ENCODE measurements at regions of chr19 and their contacts with region 1.

Region 1: DNA sequence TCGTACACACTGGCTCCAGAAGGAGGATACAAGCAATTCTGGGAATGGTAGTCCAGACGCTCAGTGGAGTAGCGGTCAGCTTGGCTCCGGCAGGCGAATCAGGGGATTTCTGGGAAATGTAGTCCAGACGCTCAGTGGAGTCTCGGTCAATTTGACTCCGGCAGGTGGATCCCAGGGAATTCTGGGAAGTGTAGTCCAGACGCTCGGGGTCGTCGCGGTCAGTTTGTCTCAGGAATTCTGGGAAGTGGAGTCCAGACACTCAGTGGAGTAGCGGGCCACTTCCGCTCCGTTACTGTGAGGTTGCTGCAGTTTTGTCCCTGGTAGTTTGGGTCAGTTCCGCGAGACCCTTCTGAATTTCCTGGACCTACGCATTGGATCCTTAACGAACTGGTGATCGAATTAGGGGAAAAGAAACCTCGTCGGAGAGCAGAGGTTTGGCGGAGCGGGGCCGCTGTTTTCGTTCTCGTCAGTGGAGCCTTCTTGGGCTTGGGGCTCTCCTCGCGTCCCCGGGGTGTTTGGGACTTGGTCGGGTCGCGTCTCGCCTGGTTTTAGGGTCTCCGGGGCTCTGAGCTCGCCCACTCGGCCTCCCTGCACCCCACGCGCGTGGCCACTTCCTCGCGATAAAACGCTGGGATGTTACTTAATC is at the start of gene ZNF225:
- DNase-seq: peak; percentile 98
- H3K4me3 ChIP-seq: peak within 1 kb of the TSS; percentile 48 to 79 (median 64)
- H3K27ac ChIP-seq: peak within 1 kb of the TSS; percentile 76 to 83 (median 82)
- H3K4me1 ChIP-seq: peaks cover 0 to 24% (median 20%) of the 10 kb centered on the region in 4 donors
- H3K27me3 ChIP-seq: no peaks in the 10 kb centered on the region
- CTCF ChIP-seq: no peak
- EP300 ChIP-seq: peak in 1 of 4 donors; percentile 25
- POLR2A ChIP-seq: no peak
- total RNA-seq, gene ZNF225: 3.0 to 4.9 (median 3.4) TPM

Region 2: GRCh38 chr19:43934985-43935708 is 178.1 kb before region 1 on chr19 and contains the start of gene ZNF45:
- intact Hi-C with region 1: loop called (anchors 2 kb)
- DNase-seq: peak; percentile 92
- H3K4me3 ChIP-seq: peak within 1 kb of the TSS; percentile 50 to 68 (median 65)
- H3K27ac ChIP-seq: peak within 1 kb of the TSS; percentile 86 to 89 (median 88)
- H3K4me1 ChIP-seq: peaks cover 0 to 21% (median 9%) of the 10 kb centered on the region in 4 donors
- H3K27me3 ChIP-seq: no peaks in the 10 kb centered on the region
- CTCF ChIP-seq: no peak
- EP300 ChIP-seq: no peak
- POLR2A ChIP-seq: peak in 1 of 2 donors; percentile 17
- total RNA-seq, gene ZNF45: 5.5 to 18.2 (median 13.2) TPM

Region 3: DNA sequence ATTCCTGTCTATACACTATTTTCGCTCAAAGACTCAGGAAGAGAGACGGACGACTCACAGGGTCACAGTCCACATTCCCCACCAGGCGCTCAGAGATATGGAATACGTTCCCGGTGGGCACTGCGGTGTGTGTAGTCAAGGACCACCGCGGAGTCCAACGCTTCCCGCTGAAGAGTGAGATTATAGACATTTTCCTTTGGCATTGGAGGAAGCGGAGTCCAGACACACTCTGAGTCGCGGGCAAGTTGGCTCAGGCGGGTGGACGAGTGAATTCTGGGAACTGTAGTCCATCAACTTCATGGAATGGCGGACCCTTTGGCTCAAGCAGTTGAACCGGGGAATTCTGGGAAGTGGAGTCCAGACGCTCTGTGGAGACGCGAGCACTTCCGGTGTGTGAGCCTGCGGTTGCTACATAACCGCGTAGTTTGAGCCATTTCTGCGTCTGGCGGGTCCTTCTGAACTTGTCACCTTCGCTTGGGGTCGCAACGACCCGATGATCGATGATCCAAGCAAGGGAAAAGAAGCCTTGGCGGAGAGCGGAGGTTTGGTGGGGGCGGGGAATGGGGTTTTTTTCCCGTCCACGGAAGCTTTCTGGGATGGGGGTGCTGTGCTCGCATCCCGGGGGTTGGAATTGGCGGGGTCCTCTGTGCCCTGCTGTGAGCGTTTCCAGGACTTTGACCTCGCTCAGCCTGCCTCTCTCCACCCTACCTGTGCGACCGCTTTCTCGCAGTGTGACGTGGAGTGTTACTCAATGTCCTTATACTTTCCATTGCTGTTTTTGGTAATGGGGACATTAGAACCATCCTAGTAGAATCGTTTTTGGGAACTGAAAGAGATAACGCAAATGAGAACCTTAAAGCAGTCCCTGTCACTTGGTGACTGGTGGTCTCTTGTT is 110.4 kb before region 1 on chr19 and contains the start of gene ZNF230:
- intact Hi-C with region 1: loop called (anchors 5 kb)
- DNase-seq: peak; percentile 96
- H3K4me3 ChIP-seq: peak within 1 kb of the TSS; percentile 57 to 85 (median 69)
- H3K27ac ChIP-seq: peak within 1 kb of the TSS; percentile 69 to 81 (median 80)
- H3K4me1 ChIP-seq: peaks cover 0 to 19% (median 12%) of the 10 kb centered on the region in 4 donors
- H3K27me3 ChIP-seq: no peaks in the 10 kb centered on the region
- CTCF ChIP-seq: peak in 1 of 4 experiments; percentile 14
- EP300 ChIP-seq: peak in 1 of 4 donors; percentile 10
- POLR2A ChIP-seq: peak in 1 of 2 donors; percentile 26
- total RNA-seq, gene ZNF230: 3.0 to 10.6 (median 5.1) TPM

Region 4: DNA sequence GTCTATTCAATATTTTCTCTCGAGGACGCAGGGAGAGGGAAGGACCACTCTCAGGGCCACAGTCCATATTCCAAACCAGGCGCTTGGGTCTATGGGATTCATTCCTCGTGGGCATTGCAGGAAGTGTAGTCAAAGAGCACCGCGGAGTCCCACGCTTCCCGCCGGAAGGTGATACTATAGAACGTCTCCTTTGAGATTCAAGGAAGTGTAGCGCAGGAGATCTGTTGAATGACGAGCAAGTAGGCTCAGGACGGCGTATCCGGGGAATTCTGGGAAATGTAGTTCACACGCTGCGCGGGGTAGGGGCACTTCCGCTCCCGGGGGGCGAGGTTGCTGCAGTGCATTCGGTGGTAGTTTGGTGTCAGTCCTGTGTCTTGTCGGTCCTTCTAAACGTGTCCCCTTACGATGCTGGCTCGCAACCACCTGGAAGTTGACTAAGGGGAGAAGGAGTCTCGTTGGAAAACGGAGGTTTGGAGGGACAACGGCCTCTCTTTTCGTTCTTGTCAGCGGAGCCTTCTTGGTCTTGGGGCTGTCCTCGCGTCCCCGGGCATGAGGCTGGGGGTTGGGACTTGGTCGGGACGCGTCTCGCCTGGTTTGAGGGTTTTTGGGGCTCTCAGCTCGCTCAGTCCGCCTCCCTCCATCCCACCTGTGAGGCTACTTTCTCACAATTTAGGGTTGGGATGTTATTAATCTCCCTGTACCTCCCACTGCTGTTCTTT is 41.3 kb before region 1 on chr19 and contains the start of gene ZNF284:
- intact Hi-C with region 1: loop called (anchors 1 kb)
- DNase-seq: peak; percentile 92
- H3K4me3 ChIP-seq: peak within 1 kb of the TSS; percentile 47 to 68 (median 62)
- H3K27ac ChIP-seq: peak within 1 kb of the TSS; percentile 60 to 68 (median 66)
- H3K4me1 ChIP-seq: peaks cover 0 to 14% (median 10%) of the 10 kb centered on the region in 4 donors
- H3K27me3 ChIP-seq: no peaks in the 10 kb centered on the region
- CTCF ChIP-seq: no peak
- EP300 ChIP-seq: no peak
- POLR2A ChIP-seq: no peak
- total RNA-seq, gene ZNF284: 1.8 to 3.6 (median 2.6) TPM

Region 5: GRCh38 chr19:44164673-44165512 is 51.6 kb after region 1 on chr19 and contains the start of gene ZNF226:
- intact Hi-C with region 1: loop called (anchors 2 kb)
- DNase-seq: peak; percentile 95
- H3K4me3 ChIP-seq: peak within 1 kb of the TSS; percentile 45 to 73 (median 65)
- H3K27ac ChIP-seq: peak within 1 kb of the TSS; percentile 82 to 87 (median 84)
- H3K4me1 ChIP-seq: peaks cover 0 to 12% (median 11%) of the 10 kb centered on the region in 4 donors
- H3K27me3 ChIP-seq: no peaks in the 10 kb centered on the region
- CTCF ChIP-seq: no peak
- EP300 ChIP-seq: no peak
- POLR2A ChIP-seq: no peak
- total RNA-seq, gene ZNF226: 14.4 to 20.2 (median 18.6) TPM

Region 6: GRCh38 chr19:44304659-44305193 is 191.5 kb after region 1 on chr19 and contains the start of gene ZNF235:
- intact Hi-C with region 1: loop called (anchors 2 kb)
- DNase-seq: peak; percentile 95
- H3K4me3 ChIP-seq: peak within 1 kb of the TSS; percentile 57 to 84 (median 78)
- H3K27ac ChIP-seq: peak within 1 kb of the TSS; percentile 76 to 89 (median 89)
- H3K4me1 ChIP-seq: peaks cover 0 to 12% (median 10%) of the 10 kb centered on the region in 4 donors
- H3K27me3 ChIP-seq: no peaks in the 10 kb centered on the region
- CTCF ChIP-seq: no peak
- EP300 ChIP-seq: no peak
- POLR2A ChIP-seq: peak; percentile 32 to 42
- total RNA-seq, gene ZNF235: 5.8 to 12.7 (median 9.0) TPM